ENCODE measurements at regions of chr2 and their contacts with region 1.

Region 1: DNA sequence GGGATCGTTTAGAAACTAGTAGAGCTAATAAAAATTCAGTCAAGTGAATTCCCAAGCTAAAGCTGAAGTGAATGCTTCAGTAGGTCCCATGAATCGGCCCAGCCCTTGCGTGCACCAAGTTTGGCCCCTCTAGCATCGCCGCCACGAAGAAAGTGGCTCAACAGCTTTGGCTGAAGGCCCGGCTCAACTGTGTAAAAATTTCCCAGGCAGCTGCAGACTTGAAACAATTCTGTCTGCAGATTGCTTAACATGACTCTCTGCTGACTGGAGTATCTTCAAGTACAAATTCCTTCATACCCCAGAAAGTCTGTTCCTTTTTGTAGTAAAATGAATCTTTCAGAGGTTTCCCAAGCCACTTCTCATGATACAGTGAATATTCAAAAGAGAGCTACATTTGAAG is 32.7 kb downstream of the ALMS1 start:
- DNase-seq: peak; percentile 78

Region 2: DNA sequence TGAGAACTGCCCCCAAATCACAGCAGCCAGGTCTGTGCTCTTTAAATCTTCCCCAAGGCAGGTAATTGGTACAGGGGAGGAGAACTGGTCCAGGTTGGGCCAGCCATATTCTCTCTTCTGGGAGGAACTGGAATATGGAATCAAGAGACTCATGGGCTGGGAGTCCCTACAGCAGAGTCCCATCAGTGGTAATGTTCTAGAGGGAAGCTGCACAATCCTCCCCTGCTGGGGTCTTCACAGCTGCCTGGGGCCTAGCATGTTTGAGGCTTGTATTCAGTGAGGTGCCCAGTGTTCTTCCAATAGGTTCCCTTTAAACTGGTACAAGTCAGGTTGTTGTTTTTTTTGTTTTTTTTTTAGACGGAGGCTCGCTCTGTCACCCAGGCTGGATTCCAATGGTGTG is 103.9 kb before region 1 on chr2:
- intact Hi-C with region 1: no loop called
- DNase-seq: no peak

Region 3: DNA sequence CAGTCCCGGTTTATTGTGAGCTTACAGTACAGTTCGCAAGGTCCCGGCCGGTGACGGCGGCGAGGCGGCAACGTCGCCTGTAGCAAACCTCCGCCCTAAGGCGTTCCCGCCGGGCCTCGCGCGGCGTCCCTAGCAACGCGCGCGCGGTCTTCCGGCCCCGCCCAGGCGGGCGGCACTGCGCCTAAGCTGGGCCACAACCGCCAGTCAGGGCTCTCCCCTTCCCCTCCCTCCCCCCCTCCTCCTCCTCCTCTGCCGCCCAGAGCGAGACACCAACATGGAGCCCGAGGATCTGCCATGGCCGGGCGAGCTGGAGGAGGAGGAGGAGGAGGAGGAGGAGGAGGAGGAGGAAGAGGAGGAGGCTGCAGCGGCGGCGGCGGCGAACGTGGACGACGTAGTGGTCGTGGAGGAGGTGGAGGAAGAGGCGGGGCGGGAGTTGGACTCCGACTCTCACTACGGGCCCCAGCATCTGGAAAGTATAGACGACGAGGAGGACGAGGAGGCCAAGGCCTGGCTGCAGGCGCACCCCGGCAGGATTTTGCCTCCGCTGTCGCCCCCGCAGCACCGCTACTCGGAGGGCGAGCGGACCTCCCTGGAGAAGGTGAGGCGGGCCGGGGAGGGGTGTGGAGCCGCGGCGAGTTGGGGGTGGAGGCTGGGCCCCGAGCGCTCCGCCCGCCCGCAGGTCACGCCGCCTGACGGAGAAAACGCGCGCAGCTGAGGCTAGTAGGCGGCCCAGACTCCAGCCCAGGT is 32.6 kb before region 1 on chr2 and contains the start of gene ALMS1:
- intact Hi-C with region 1: loop called (anchors 1 kb)
- DNase-seq: peak; percentile 94
- total RNA-seq, gene ALMS1: 11.6 TPM

Region 4: GRCh38 chr2:73575261-73575660 is 156.9 kb after region 1 on chr2:
- intact Hi-C with region 1: no loop called
- DNase-seq: no peak